ENCODE measurements at regions of chr2 and their contacts with region 1.

Region 1: DNA sequence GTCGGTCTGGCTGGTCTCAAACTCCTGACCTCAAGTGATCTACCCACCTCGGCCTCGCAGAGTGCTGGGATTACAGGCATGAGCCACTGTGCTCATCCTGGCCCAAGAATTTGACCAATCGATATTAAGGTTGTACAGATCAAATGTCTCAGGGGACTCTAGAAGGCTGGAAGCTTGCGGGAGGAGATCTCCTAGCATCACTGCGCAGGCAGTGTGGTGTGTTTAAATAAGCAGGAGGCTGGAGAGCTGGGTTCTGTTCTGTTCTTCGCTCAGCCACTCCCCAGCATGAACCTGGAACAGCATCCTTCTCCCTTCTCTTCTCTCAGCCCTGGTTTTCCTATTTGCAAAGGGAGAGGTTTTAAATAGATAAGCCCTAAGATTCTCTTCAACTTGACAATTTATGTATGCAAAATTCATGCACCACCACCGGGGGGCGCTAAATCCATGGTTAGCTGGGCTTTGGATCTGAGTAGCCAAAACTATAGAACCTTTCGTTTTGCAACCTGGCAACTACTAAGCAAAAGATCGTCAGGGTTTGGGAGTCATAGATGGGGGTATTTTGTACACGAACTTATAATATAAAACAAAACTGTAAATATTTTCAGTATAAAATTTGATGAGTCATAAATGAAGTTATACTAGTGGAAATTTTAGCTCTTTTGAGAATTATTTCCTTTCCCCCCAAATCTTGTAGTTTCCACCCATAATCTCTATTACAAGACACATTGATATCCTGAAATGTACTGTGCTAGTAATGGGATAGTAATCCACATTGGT is 60.6 kb downstream of the SLC16A14 start:
- DNase-seq: peak; percentile 95
- H3K4me3 Mint-ChIP-seq: no peak overlapping the region
- H3K27ac Mint-ChIP-seq: no peak overlapping the region
- H3K4me1 Mint-ChIP-seq: peaks cover 5% of the 10 kb centered on the region
- H3K27me3 Mint-ChIP-seq: no peaks in the 10 kb centered on the region

Region 2: GRCh38 chr2:229431327-229431954 is 576.7 kb before region 1 on chr2:
- CTCF ChIA-PET with region 1: no interaction called
- intact Hi-C with region 1: no loop called
- DNase-seq: no peak
- H3K4me3 Mint-ChIP-seq: no peak overlapping the region
- H3K27ac Mint-ChIP-seq: no peak overlapping the region
- H3K4me1 Mint-ChIP-seq: no peaks in the 10 kb centered on the region
- H3K27me3 Mint-ChIP-seq: no peaks in the 10 kb centered on the region

Region 3: DNA sequence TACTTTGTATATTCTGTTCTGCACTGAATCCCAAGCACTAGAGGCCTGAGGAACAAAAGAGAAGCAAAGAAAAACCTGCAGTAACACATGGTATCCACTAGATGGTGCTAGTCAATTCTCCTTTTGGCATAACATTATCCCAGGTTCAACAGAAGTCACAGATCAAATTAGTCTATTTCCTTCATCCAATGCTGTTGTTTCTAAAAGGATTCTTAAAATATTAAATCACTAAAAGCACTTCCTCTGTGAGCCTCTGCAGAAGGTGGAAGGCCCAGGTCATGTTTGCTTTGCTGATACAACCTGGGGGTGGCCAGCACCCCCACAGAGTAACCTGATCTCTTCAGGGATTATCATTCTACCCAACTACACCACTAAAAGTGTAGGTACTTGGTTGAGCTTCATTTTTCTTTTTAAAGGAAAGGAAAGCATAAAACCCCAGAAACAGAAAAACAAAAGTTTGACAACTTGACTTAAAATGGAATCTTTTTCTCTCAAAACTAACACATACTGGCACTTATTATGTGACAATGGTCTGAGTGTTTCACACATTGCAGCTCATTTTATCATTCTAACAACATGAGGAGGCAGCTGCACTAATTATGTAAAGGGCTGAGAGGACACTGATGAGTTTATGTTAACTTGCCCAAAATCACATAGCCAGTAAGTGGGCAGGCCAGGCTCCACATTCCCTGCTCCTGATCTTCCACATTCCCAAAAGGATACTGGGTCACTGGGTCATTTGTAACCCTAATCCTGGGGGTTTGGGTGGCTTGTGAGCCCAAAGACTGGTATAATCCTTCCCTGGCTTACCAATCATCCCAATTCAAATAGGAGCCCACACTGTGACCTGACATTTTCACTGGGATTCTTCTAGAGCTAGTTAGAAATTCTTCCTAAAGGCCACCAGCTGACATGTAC is 227.0 kb before region 1 on chr2:
- CTCF ChIA-PET with region 1: no interaction called
- intact Hi-C with region 1: loop called (anchors 1 kb)
- DNase-seq: no peak
- H3K4me3 Mint-ChIP-seq: no peak overlapping the region
- H3K27ac Mint-ChIP-seq: no peak overlapping the region
- H3K4me1 Mint-ChIP-seq: peaks cover 11% of the 10 kb centered on the region
- H3K27me3 Mint-ChIP-seq: no peaks in the 10 kb centered on the region

Region 4: DNA sequence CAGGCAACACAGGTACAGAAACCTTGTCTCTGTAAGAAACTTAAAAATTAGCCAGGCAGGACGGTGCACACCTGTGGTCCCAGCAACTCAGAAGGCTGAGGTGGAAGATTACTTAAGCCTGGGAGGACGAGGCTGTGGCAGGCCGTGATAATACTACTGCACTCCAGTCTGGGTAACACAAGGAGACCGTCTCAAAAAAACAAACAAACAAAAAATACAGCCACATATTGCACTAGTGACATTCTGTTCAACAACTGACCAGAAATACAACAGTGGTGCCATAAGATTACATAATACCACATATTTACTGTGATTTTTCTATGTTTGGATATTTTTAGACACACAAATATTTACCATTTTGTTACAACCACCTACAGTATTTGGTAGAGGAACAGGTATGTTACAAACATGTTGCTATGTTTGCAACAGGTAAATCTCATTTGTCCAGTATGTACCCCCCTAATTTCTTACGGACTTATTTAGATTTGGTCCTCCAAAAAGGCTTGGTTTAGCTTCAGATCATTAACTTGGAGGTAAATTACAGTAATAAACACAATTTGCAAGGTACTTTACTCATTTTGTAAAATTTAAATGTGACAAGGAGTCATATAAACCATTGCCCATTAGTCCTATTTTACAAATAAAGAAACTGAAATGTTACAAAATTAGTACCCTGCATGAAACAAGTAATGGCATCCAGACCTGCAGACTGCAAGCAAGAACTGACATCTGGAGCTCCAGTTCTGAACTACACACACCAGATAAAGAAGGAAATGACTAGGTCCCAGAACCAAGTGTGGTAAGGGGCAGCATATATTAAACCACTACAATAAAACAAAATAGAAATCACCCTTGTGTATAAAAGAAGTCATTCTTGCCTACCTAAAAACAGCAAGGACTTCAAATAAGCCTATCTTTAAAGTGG is 123.1 kb before region 1 on chr2:
- CTCF ChIA-PET with region 1: no interaction called
- intact Hi-C with region 1: no loop called
- DNase-seq: no peak
- H3K4me3 Mint-ChIP-seq: no peak overlapping the region
- H3K27ac Mint-ChIP-seq: no peak overlapping the region
- H3K4me1 Mint-ChIP-seq: peaks cover 53% of the 10 kb centered on the region
- H3K27me3 Mint-ChIP-seq: no peaks in the 10 kb centered on the region

Region 5: GRCh38 chr2:229980431-229981184 is 27.5 kb before region 1 on chr2:
- CTCF ChIA-PET with region 1: no interaction called
- intact Hi-C with region 1: no loop called
- DNase-seq: peak; percentile 43
- H3K4me3 Mint-ChIP-seq: no peak overlapping the region
- H3K27ac Mint-ChIP-seq: peak overlapping the region; percentile 65
- H3K4me1 Mint-ChIP-seq: peaks cover 8% of the 10 kb centered on the region
- H3K27me3 Mint-ChIP-seq: no peaks in the 10 kb centered on the region

Region 6: GRCh38 chr2:230053753-230054478 is 45.8 kb after region 1 on chr2:
- CTCF ChIA-PET with region 1: interaction called, 4 read pairs
- intact Hi-C with region 1: loop called (anchors 1 kb)
- DNase-seq: peak; percentile 67
- H3K4me3 Mint-ChIP-seq: no peak overlapping the region
- H3K27ac Mint-ChIP-seq: no peak overlapping the region
- H3K4me1 Mint-ChIP-seq: peaks cover 17% of the 10 kb centered on the region
- H3K27me3 Mint-ChIP-seq: no peaks in the 10 kb centered on the region

Region 7: DNA sequence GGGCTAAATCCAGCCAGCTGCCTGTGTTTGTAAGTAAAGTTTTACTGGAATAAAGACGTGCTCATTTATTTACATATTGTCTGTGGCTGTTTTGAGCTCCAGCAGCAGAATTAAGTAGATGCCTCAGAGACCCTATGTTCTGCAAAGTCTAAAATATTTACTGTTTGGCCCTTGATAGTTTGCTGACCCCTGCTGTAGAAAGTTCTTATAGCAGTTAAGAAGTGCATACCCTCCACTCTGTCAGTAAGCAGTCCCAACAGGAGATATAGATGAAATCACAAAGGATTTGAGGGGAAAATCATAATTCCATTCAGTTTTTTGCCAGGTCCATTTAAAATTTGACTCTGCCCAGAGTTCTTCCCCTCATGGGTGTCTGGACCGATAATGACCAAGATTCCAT is 806.5 kb after region 1 on chr2:
- CTCF ChIA-PET with region 1: no interaction called
- intact Hi-C with region 1: loop called (anchors 2 kb)
- DNase-seq: no peak
- H3K4me3 Mint-ChIP-seq: no peak overlapping the region
- H3K27ac Mint-ChIP-seq: peak overlapping the region; percentile 5
- H3K4me1 Mint-ChIP-seq: no peaks in the 10 kb centered on the region
- H3K27me3 Mint-ChIP-seq: no peaks in the 10 kb centered on the region

Measured in activated naive CD4-positive, alpha-beta T cell treated with anti-CD3 and anti-CD28 coated beads for 36 hours (primary cell).